CD4-positive, alpha-beta memory T cell (primary cell): ENCODE measurements at regions of chr14 and their contacts with region 1.

Region 1: GRCh38 chr14:24135834-24136542 is at the start of gene PSME1:
- DNase-seq: peak; percentile 92 to 94 (median 93)
- H3K4me3 ChIP-seq: peak within 1 kb of the TSS; percentile 30 to 87
- H3K4me3 Mint-ChIP-seq: peak within 1 kb of the TSS; percentile 87 to 94 (median 92)
- H3K27ac ChIP-seq: peak within 1 kb of the TSS; percentile 84
- H3K27ac Mint-ChIP-seq: peak within 1 kb of the TSS; percentile 88 to 96 (median 94)
- H3K4me1 ChIP-seq: peaks cover 59% of the 10 kb centered on the region
- H3K4me1 Mint-ChIP-seq: peaks cover 35 to 70% (median 55%) of the 10 kb centered on the region in 4 donors
- H3K27me3 ChIP-seq: no peaks in the 10 kb centered on the region
- H3K27me3 Mint-ChIP-seq: no peaks in the 10 kb centered on the region
- total RNA-seq, gene PSME1: 257 to 273 TPM

Region 2: GRCh38 chr14:24123508-24124417 is 12.2 kb before region 1 on chr14:
- CTCF ChIA-PET with region 1: interaction called, 6 read pairs
- POLR2A ChIA-PET with region 1: interaction called, 347 read pairs
- intact Hi-C with region 1: no loop called
- DNase-seq: no peak
- H3K4me3 ChIP-seq: no peak overlapping the region
- H3K4me3 Mint-ChIP-seq: no peak overlapping the region
- H3K27ac ChIP-seq: no peak overlapping the region
- H3K27ac Mint-ChIP-seq: peak overlapping the region in 5 of 7 donors; percentile 9 to 61 (median 51)
- H3K4me1 ChIP-seq: no peaks in the 10 kb centered on the region
- H3K4me1 Mint-ChIP-seq: peaks cover 2 to 5% (median 4%) of the 10 kb centered on the region in 4 donors
- H3K27me3 ChIP-seq: no peaks in the 10 kb centered on the region
- H3K27me3 Mint-ChIP-seq: no peaks in the 10 kb centered on the region

Region 3: GRCh38 chr14:24146978-24147760 is 11.2 kb after region 1 on chr14 and contains the start of gene RNF31:
- CTCF ChIA-PET with region 1: interaction called, 25 read pairs
- POLR2A ChIA-PET with region 1: interaction called, 101 read pairs
- intact Hi-C with region 1: loop called (anchors 1 kb)
- DNase-seq: peak; percentile 95 to 99 (median 97)
- H3K4me3 ChIP-seq: peak within 1 kb of the TSS; percentile 85 to 99
- H3K4me3 Mint-ChIP-seq: peak within 1 kb of the TSS; percentile 97 to 100 (median 98)
- H3K27ac ChIP-seq: peak within 1 kb of the TSS; percentile 92
- H3K27ac Mint-ChIP-seq: peak within 1 kb of the TSS; percentile 95 to 99 (median 98)
- H3K4me1 ChIP-seq: peaks cover 63% of the 10 kb centered on the region
- H3K4me1 Mint-ChIP-seq: peaks cover 32 to 80% (median 54%) of the 10 kb centered on the region in 4 donors
- H3K27me3 ChIP-seq: no peaks in the 10 kb centered on the region
- H3K27me3 Mint-ChIP-seq: no peaks in the 10 kb centered on the region
- total RNA-seq, gene RNF31: 108 to 113 TPM

Region 4: DNA sequence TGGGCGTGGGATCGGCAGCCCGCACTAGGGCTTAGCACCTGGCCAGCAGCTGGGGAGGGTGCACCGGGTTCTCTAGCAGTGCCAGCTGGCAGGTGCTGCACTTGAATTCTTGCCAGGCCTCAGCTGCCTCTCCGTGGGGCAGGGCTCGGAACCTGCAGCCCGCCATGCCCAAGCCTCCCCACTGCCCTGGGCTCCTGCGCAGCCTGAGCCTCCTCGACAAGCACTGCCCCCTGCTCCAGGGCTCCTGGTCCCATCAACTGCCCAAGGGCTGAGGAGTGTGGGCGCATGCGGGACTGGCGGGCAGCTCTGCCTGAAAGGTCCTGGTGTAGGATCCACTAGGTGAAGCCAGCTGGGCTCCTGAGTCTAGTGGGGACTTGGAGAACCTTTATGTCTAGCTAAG is 337.2 kb after region 1 on chr14:
- CTCF ChIA-PET with region 1: no interaction called
- POLR2A ChIA-PET with region 1: no interaction called
- intact Hi-C with region 1: no loop called
- DNase-seq: no peak
- H3K4me3 ChIP-seq: no peak overlapping the region
- H3K4me3 Mint-ChIP-seq: no peak overlapping the region
- H3K27ac ChIP-seq: no peak overlapping the region
- H3K27ac Mint-ChIP-seq: no peak overlapping the region
- H3K4me1 ChIP-seq: no peaks in the 10 kb centered on the region
- H3K4me1 Mint-ChIP-seq: no peaks in the 10 kb centered on the region
- H3K27me3 ChIP-seq: no peaks in the 10 kb centered on the region
- H3K27me3 Mint-ChIP-seq: peaks cover 0 to 4% of the 10 kb centered on the region in 2 donors